GM13977 (cell line): ENCODE measurements at regions of chr11 and their contacts with region 1.

Region 1: DNA sequence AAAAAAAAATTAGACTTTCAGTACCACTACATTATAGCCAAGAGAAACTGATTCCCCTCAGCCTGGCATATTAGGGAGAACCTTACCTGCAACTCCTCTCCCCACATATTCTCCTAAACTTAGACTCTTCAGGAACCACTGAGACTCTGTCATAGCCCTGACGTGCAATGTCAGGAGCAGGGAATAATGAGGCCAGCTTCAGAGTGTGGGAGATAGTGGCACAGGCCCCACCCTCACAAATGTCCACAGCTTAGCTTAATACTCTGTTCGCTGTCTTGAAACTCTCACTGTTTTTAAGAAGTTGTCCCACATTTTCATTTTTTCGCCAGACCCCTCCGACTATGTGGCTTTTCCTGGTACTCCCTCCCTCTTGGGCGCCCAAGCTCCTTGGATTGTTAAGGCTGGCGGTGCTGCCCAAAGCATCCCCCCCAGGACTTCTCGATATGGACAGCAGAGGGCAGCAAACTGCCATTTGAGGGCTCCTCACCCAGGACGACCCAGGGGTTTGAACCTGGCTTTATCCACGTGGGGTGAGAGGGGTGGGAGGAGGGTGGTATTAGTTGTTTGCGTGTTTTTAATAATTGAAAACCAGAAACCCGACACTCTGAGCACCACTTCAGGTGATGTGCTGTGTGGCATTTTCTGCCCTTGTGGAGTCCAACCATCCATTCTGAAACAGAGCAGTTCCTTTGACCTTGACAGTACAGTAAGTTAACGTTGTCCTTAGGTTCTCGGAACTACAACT is 45.2 kb upstream of the RASSF10 start:
- DNase-seq: peak; percentile 78
- CTCF ChIP-seq: peak; percentile 86

Region 2: GRCh38 chr11:13183094-13183825 is 219.3 kb after region 1 on chr11:
- in situ Hi-C with region 1: loop called (anchors 25 kb)
- DNase-seq: peak; percentile 28
- CTCF ChIP-seq: peak; percentile 66